ENCODE measurements at regions of chr1 and their contacts with region 1.

Region 1: DNA sequence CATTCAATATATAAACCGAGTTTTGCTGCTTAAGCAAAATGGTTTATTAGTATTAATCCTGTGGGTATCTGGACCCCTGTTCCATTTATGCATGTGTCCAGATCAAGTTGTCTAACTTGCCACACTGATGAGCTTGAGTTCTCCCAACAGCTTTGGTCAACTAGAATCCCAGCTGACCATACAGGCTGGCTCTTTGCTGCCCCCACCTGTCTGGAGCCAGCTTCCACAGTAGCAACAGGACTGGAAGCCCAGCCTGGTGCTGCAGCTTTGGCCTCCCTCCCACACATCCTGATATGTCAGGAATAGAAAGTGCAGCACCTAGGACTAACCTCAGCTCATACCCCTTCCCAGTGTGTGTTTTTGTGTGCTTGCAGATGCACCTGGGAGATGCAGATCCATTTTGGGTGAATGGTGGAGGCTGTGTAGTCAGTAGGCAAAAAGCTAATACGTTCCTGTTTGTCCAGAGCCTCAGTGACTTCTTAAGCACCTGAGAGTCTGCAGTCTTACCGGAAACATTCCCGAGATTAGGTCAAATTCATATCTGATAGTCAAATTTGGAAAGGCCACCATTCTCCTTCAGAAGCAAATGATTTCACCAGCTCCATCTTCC is 40.9 kb upstream of the BEND5 start:
- DNase-seq: peak; percentile 35
- CTCF ChIP-seq: peak; percentile 95

Region 2: DNA sequence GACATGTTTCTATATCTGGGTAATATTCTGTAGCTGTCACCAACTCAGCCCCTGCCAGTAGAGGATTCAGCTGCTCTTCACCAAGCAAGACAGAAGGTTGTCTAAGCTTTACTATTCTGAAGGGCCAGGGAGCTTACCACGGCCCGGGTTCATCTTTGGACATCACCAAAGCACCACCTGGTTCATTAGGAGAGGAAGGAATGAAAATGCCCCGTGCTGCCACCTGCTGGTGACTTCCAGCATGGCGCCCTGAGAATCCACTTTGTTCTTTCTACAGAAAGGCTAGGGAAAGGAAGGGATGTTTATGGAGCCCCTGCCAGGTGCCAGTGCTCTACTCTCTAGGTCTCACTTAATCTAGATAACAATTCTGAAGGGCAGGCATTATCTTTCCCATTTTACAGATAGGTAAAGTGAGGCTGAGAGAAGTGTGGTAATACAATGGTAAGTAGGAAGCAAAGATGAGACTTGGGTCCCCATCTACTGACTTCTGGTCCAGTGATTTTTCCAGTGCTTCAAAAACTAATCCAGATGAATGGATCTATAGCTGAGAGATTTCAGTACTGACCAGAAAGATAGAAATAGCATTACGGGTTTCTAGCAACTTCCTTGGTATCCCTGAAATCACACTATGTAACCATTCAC is 120.4 kb before region 1 on chr1:
- CTCF ChIA-PET with region 1: interaction called, 17 read pairs
- POLR2A ChIA-PET with region 1: no interaction called
- DNase-seq: peak; percentile 54
- CTCF ChIP-seq: peak; percentile 92

Region 3: GRCh38 chr1:48730164-48730910 is 87.3 kb before region 1 on chr1:
- CTCF ChIA-PET with region 1: no interaction called
- POLR2A ChIA-PET with region 1: no interaction called
- DNase-seq: no peak
- CTCF ChIP-seq: no peak

Region 4: GRCh38 chr1:48776393-48777218 is 41.0 kb before region 1 on chr1 and contains the start of gene BEND5:
- CTCF ChIA-PET with region 1: interaction called, 13 read pairs
- POLR2A ChIA-PET with region 1: no interaction called
- DNase-seq: peak; percentile 28
- CTCF ChIP-seq: no peak

Region 5: DNA sequence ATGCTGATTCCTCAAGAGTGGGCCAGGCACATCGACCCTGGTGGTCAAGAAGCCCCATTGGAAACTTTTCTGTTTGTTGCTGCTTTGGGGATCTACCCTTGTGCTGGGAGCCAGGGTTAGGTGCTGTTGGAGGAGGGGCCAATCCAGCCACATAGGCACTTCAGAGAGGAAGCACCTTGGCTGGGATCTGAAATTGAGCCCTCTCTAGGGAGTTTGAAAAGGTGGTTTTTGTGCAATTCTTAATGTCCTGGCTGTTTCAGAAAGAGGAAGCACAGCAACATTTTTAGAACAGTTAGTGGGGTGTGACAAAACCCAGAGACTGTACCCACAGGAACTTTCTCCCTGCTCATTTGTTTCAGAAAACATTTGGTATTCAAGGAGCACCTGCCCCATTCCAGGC is 23.7 kb before region 1 on chr1:
- CTCF ChIA-PET with region 1: interaction called, 20 read pairs
- POLR2A ChIA-PET with region 1: interaction called, 3 read pairs
- DNase-seq: peak; percentile 31
- CTCF ChIP-seq: no peak

Measured in GM10248 (cell line).